Left ventricle myocardium inferior (tissue), 1 donor: ENCODE measurements at regions of chr12 and their contacts with region 1.

Region 1: GRCh38 chr12:52372216-52373154 is 5.2 kb upstream of the KRT85 start:
- DNase-seq: peak; percentile 74
- H3K4me3 ChIP-seq: no peak overlapping the region
- H3K27ac ChIP-seq: no peak overlapping the region
- H3K4me1 ChIP-seq: peaks cover 4% of the 10 kb centered on the region
- H3K27me3 ChIP-seq: peaks cover 48% of the 10 kb centered on the region
- CTCF ChIP-seq: peak; percentile 86

Region 2: GRCh38 chr12:52436000-52436827 is 63.7 kb after region 1 on chr12:
- intact Hi-C with region 1: no loop called
- DNase-seq: no peak
- H3K4me3 ChIP-seq: no peak overlapping the region
- H3K27ac ChIP-seq: peak overlapping the region; percentile 18
- H3K4me1 ChIP-seq: no peaks in the 10 kb centered on the region
- H3K27me3 ChIP-seq: peaks cover 63% of the 10 kb centered on the region
- CTCF ChIP-seq: no peak

Region 3: DNA sequence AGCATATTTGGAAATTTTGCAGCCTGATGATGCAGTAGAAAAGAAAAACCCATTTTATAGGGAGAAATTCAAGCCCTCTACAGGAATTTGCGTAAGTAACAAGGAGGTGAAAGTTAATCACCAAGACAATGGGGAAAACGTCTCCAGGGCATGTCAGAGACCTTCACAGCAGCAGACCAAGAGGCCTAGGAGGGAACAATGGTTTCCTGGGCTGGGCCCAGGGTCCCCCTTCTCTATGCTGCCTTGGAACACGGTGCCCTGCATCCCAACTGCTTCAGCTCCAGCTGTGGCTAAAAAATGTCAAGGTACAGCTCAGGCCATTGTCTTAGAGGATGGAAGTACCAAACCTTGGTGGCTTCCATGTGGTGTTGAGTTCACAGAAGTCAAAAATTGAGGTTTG is 107.6 kb after region 1 on chr12:
- intact Hi-C with region 1: no loop called
- DNase-seq: no peak
- H3K4me3 ChIP-seq: no peak overlapping the region
- H3K27ac ChIP-seq: no peak overlapping the region
- H3K4me1 ChIP-seq: no peaks in the 10 kb centered on the region
- H3K27me3 ChIP-seq: peaks cover 47% of the 10 kb centered on the region
- CTCF ChIP-seq: no peak

Region 4: DNA sequence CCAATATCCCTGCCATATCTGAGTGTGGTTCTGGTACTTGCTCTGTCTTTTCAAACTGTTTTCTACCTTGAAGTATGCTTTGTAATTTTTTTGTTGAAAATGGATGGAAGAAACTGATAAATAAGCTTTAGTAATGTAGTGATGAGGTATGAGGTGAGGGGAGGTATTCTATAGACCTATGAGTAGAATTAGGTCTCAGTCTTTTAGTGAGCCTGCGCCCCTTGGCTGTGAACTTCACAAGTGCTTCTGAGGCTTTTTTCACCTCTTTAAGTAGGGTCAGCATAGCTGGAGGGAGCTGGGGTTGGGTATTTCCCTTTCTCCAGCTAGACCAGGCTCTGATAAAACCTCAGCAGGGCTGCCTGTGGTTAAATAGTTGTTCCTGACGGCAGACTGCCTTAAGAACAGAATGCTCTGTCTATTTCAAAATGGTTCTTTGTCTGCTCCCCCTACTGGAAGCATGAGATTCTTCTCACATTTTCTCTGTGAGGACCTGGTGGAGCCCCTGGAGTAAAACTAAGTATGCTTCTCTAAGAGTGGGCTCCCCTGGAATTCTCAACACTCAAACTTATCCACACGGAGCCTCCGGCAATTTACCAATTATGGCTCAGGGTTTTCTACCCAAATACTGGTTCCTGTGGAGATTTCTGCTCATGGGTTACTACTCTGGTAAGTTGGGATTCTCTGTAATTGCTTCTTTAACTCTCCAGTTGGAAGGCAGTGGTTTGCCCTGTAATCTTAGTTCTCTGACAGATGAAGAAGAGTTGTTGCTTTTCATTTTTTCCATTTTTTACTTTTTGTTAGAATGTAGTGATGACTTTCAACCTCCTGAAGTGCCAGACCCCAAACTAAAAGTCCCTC is 134.6 kb after region 1 on chr12:
- intact Hi-C with region 1: loop called (anchors 10 kb)
- DNase-seq: no peak
- H3K4me3 ChIP-seq: no peak overlapping the region
- H3K27ac ChIP-seq: no peak overlapping the region
- H3K4me1 ChIP-seq: no peaks in the 10 kb centered on the region
- H3K27me3 ChIP-seq: peaks cover 53% of the 10 kb centered on the region
- CTCF ChIP-seq: peak; percentile 70

Region 5: GRCh38 chr12:52870351-52871290 is 498.1 kb after region 1 on chr12:
- intact Hi-C with region 1: loop called (anchors 5 kb)
- DNase-seq: peak; percentile 55
- H3K4me3 ChIP-seq: no peak overlapping the region
- H3K27ac ChIP-seq: peak overlapping the region; percentile 56
- H3K4me1 ChIP-seq: peaks cover 40% of the 10 kb centered on the region
- H3K27me3 ChIP-seq: no peaks in the 10 kb centered on the region
- CTCF ChIP-seq: peak; percentile 75